ENCODE measurements at regions of chr6 and their contacts with region 1.

Region 1: DNA sequence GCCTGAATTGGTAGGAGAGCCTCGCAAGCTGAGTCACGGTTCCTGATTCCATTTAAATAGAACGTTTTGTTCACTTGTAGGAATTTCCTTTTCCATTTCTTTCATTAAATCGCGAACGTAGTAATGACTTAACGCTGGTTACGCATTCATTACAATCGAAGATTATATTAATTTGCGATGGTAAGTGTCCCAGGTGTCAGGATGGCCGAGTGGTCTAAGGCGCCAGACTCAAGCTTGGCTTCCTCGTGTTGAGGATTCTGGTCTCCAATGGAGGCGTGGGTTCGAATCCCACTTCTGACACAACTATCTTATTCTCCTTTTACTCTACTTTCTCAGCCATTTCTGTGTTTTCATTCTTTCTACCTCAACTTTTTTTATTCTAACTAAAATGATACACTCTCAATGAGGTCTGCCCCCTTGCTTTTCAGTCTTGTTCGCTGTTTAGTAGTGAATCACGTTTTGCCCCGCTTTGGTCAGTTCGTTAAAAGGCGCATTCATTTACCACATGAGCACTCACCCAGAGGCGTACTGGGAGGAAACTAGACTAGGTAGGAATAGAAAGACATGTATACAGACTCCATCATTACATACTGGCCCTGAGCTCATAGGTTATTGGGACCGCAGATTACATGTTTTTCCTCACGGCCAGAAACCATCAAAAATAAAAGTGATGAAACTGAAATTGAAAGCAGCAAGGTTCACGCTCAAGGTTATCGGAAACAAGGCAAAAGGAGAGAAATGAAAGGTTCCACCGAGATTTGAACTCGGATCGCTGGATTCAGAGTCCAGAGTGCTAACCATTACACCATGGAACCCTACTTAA is 17.3 kb upstream of the TRIM27 start:
- DNase-seq: peak; percentile 85 to 88 (median 86)
- H3K4me3 ChIP-seq: peak overlapping the region; percentile 62 to 77
- H3K4me3 Mint-ChIP-seq: peak overlapping the region; percentile 87 to 98 (median 95)
- H3K27ac ChIP-seq: peak overlapping the region; percentile 39
- H3K27ac Mint-ChIP-seq: peak overlapping the region; percentile 85 to 97 (median 94)
- H3K4me1 ChIP-seq: peaks cover 35% of the 10 kb centered on the region
- H3K4me1 Mint-ChIP-seq: peaks cover 26 to 57% (median 46%) of the 10 kb centered on the region in 4 donors
- H3K27me3 ChIP-seq: no peaks in the 10 kb centered on the region
- H3K27me3 Mint-ChIP-seq: peaks cover 0 to 10% of the 10 kb centered on the region in 2 donors

Region 2: GRCh38 chr6:28080631-28081485 is 860.2 kb before region 1 on chr6:
- CTCF ChIA-PET with region 1: no interaction called
- POLR2A ChIA-PET with region 1: no interaction called
- intact Hi-C with region 1: loop called (anchors 5 kb)
- DNase-seq: peak; percentile 92 to 94 (median 93)
- H3K4me3 ChIP-seq: peak overlapping the region; percentile 90 to 94
- H3K4me3 Mint-ChIP-seq: peak overlapping the region; percentile 90 to 99 (median 98)
- H3K27ac ChIP-seq: peak overlapping the region; percentile 92
- H3K27ac Mint-ChIP-seq: peak overlapping the region; percentile 97 to 100 (median 99)
- H3K4me1 ChIP-seq: peaks cover 12% of the 10 kb centered on the region
- H3K4me1 Mint-ChIP-seq: peaks cover 9 to 22% (median 14%) of the 10 kb centered on the region in 4 donors
- H3K27me3 ChIP-seq: no peaks in the 10 kb centered on the region
- H3K27me3 Mint-ChIP-seq: no peaks in the 10 kb centered on the region

Region 3: DNA sequence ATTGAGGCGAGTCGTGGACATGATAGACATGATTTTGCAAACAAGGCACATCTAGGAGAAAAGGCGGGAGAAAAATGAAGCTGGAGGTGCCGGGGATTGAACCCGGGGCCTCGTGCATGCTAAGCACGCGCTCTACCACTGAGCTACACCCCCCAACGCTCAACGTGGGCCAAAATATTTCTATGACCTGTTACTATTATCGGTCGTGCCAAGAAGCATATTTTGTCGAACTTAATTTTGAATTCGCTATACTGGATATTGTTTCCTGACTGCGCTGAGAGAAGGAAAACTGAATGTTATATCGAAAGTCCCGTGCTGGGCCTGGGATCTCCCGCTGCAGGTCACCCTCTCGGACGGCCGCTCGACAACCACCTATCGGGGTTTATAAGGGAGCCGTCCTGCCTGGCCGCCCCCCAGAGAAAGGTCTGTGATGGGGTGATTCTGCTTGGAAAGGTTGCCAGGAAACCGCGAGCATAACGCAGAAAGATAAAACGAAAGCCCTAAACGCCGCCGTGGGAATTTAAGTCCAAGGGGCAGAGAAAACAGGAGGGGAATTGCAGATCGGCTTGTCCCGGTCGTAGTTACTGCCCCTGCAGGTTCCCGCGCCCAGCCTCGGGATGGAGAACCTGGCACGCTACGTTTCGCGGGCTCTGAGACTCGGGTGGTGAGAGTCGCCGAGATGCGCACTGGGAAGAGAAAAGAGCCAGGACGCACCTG is 77.3 kb before region 1 on chr6:
- CTCF ChIA-PET with region 1: interaction called, 19 read pairs
- POLR2A ChIA-PET with region 1: interaction called, 42 read pairs
- intact Hi-C with region 1: loop called (anchors 1 kb)
- DNase-seq: peak; percentile 88 to 91 (median 89)
- H3K4me3 ChIP-seq: peak overlapping the region; percentile 53 to 85
- H3K4me3 Mint-ChIP-seq: peak overlapping the region; percentile 92 to 97 (median 94)
- H3K27ac ChIP-seq: peak overlapping the region; percentile 45
- H3K27ac Mint-ChIP-seq: peak overlapping the region; percentile 79 to 99 (median 97)
- H3K4me1 ChIP-seq: peaks cover 14% of the 10 kb centered on the region
- H3K4me1 Mint-ChIP-seq: peaks cover 21 to 64% (median 43%) of the 10 kb centered on the region in 4 donors
- H3K27me3 ChIP-seq: no peaks in the 10 kb centered on the region
- H3K27me3 Mint-ChIP-seq: peaks cover 4 to 5% of the 10 kb centered on the region in 2 donors

Region 4: GRCh38 chr6:28895134-28895812 is 45.8 kb before region 1 on chr6:
- CTCF ChIA-PET with region 1: interaction called, 6 read pairs
- POLR2A ChIA-PET with region 1: interaction called, 44 read pairs
- intact Hi-C with region 1: loop called (anchors 1 kb)
- DNase-seq: peak; percentile 90 to 94 (median 93)
- H3K4me3 ChIP-seq: peak overlapping the region; percentile 90 to 97
- H3K4me3 Mint-ChIP-seq: peak overlapping the region; percentile 94 to 99 (median 98)
- H3K27ac ChIP-seq: peak overlapping the region; percentile 96
- H3K27ac Mint-ChIP-seq: peak overlapping the region; percentile 97 to 100 (median 100)
- H3K4me1 ChIP-seq: peaks cover 17% of the 10 kb centered on the region
- H3K4me1 Mint-ChIP-seq: peaks cover 4 to 24% (median 18%) of the 10 kb centered on the region in 4 donors
- H3K27me3 ChIP-seq: no peaks in the 10 kb centered on the region
- H3K27me3 Mint-ChIP-seq: peaks cover 2 to 6% of the 10 kb centered on the region in 2 donors

Region 5: DNA sequence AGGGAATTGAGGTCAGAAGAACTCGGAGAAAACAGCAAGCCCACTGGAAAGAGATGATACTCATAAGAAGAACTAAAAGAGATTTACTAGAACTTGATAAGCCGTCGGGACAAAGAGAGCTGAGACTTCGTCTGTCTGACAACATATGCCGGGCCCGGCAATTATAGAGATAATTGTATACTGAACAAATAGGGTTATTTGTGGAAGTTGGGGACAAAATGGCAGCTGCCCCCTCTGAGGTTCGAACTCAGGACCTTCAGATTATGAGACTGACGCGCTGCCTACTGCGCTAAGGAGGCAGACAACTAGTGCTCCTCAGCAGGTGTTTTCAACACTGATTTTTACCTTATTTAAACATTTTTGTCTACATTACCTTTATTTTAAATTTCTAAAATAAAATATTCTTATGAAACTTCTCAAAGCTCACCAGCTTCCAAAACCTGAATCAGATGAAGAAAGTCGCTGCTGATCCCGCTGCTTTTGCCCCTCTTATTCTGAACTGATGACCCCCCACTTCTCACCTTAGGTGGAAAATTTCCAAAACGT is 12.0 kb after region 1 on chr6:
- CTCF ChIA-PET with region 1: interaction called, 3 read pairs
- POLR2A ChIA-PET with region 1: interaction called, 7 read pairs
- intact Hi-C with region 1: loop called (anchors 1 kb)
- DNase-seq: peak; percentile 55 to 74 (median 62)
- H3K4me3 ChIP-seq: peak overlapping the region in 1 of 2 donors; percentile 7
- H3K4me3 Mint-ChIP-seq: peak overlapping the region; percentile 71 to 93 (median 84)
- H3K27ac ChIP-seq: no peak overlapping the region
- H3K27ac Mint-ChIP-seq: peak overlapping the region; percentile 37 to 96 (median 81)
- H3K4me1 ChIP-seq: peaks cover 11% of the 10 kb centered on the region
- H3K4me1 Mint-ChIP-seq: peaks cover 17 to 38% (median 26%) of the 10 kb centered on the region in 4 donors
- H3K27me3 ChIP-seq: no peaks in the 10 kb centered on the region
- H3K27me3 Mint-ChIP-seq: peaks cover 6 to 8% of the 10 kb centered on the region in 2 donors

Region 6: GRCh38 chr6:28965706-28966105 is 24.6 kb after region 1 on chr6:
- CTCF ChIA-PET with region 1: no interaction called
- POLR2A ChIA-PET with region 1: no interaction called
- intact Hi-C with region 1: no loop called
- DNase-seq: no peak
- H3K4me3 ChIP-seq: no peak overlapping the region
- H3K4me3 Mint-ChIP-seq: no peak overlapping the region
- H3K27ac ChIP-seq: no peak overlapping the region
- H3K27ac Mint-ChIP-seq: no peak overlapping the region
- H3K4me1 ChIP-seq: no peaks in the 10 kb centered on the region
- H3K4me1 Mint-ChIP-seq: no peaks in the 10 kb centered on the region
- H3K27me3 ChIP-seq: no peaks in the 10 kb centered on the region
- H3K27me3 Mint-ChIP-seq: peaks cover 12 to 16% of the 10 kb centered on the region in 2 donors

Region 7: GRCh38 chr6:29016559-29017427 is 75.7 kb after region 1 on chr6:
- CTCF ChIA-PET with region 1: interaction called, 19 read pairs
- POLR2A ChIA-PET with region 1: interaction called, 3 read pairs
- intact Hi-C with region 1: loop called (anchors 1 kb)
- DNase-seq: peak; percentile 79 to 82 (median 81)
- H3K4me3 ChIP-seq: peak overlapping the region; percentile 55 to 58
- H3K4me3 Mint-ChIP-seq: peak overlapping the region; percentile 85 to 97 (median 90)
- H3K27ac ChIP-seq: peak overlapping the region; percentile 9
- H3K27ac Mint-ChIP-seq: peak overlapping the region; percentile 70 to 92 (median 82)
- H3K4me1 ChIP-seq: peaks cover 10% of the 10 kb centered on the region
- H3K4me1 Mint-ChIP-seq: peaks cover 10 to 21% (median 15%) of the 10 kb centered on the region in 4 donors
- H3K27me3 ChIP-seq: no peaks in the 10 kb centered on the region
- H3K27me3 Mint-ChIP-seq: peaks cover 7 to 11% of the 10 kb centered on the region in 2 donors